ENCODE measurements at regions of chr11 and their contacts with region 1.

Region 1: GRCh38 chr11:124746621-124747243 is 5.3 kb downstream of the VSIG2 start:
- DNase-seq: peak; percentile 67 to 89 (median 78)
- ATAC-seq: peak; percentile 91 to 93
- H3K4me3 Mint-ChIP-seq: peak overlapping the region; percentile 86 to 99 (median 97)
- H3K27ac Mint-ChIP-seq: peak overlapping the region; percentile 77 to 99 (median 96)
- H3K4me1 Mint-ChIP-seq: peaks cover 5 to 36% (median 20%) of the 10 kb centered on the region in 4 donors
- H3K27me3 Mint-ChIP-seq: peaks cover 0 to 2% (median 2%) of the 10 kb centered on the region in 5 donors

Region 2: GRCh38 chr11:124788521-124788920 is 41.8 kb after region 1 on chr11:
- POLR2A ChIA-PET with region 1: no interaction called
- DNase-seq: no peak
- ATAC-seq: no peak
- H3K4me3 Mint-ChIP-seq: no peak overlapping the region
- H3K27ac Mint-ChIP-seq: no peak overlapping the region
- H3K4me1 Mint-ChIP-seq: peaks cover 6 to 34% (median 30%) of the 10 kb centered on the region in 4 donors
- H3K27me3 Mint-ChIP-seq: no peaks in the 10 kb centered on the region

Region 3: DNA sequence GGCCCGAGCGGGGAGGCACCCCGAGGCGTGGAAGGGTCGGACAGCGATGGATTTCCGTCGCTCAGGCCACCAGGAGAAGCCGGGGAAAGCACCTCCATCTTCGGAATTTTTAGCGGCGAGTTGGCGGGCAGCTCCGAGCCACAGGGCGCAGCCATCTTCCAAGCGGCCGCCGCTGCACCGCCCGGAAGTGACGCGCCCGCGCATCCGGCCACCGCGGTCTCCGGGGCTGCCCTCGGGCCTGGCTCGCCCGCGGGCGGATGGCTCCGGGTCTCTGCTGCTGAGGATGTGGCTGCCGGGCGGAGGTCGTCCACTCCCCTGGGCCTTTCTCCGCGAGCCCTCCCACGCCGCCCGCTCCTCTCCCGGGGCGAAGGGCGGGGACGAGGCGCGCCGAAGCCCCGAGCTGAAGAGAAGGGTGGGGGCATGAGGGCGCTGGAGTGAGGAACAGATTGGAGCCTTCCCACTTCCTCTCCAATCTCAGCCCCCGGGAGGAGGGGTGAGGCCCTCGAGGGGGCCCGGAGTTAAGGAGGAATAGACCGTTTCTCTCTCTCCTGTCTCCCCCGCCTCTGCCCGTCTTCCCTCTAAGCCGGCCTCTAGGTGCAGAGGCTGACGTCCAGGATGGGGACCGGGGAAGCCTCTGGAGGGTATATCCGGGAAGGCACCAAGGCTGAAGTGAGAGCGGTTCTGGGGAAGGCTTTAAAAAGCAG is 53.6 kb after region 1 on chr11 and contains the start of gene MSANTD2:
- POLR2A ChIA-PET with region 1: interaction called, 23 read pairs
- DNase-seq: peak; percentile 57 to 83 (median 76)
- ATAC-seq: peak; percentile 83 to 88
- H3K4me3 Mint-ChIP-seq: peak within 1 kb of the TSS; percentile 87 to 98 (median 95)
- H3K27ac Mint-ChIP-seq: peak within 1 kb of the TSS; percentile 91 to 99 (median 96)
- H3K4me1 Mint-ChIP-seq: peaks cover 15 to 34% (median 23%) of the 10 kb centered on the region in 4 donors
- H3K27me3 Mint-ChIP-seq: peaks cover 0 to 2% (median 0%) of the 10 kb centered on the region in 5 donors
- polyA plus RNA-seq, gene MSANTD2: 3.5 to 4.2 (median 4.0) TPM

Region 4: GRCh38 chr11:124865921-124866583 is 119.3 kb after region 1 on chr11:
- POLR2A ChIA-PET with region 1: no interaction called
- DNase-seq: peak in 9 of 10 donors; percentile 19 to 70 (median 49)
- ATAC-seq: peak; percentile 64 to 66
- H3K4me3 Mint-ChIP-seq: peak overlapping the region; percentile 2 to 70 (median 47)
- H3K27ac Mint-ChIP-seq: no peak overlapping the region
- H3K4me1 Mint-ChIP-seq: peaks cover 31 to 69% (median 52%) of the 10 kb centered on the region in 4 donors
- H3K27me3 Mint-ChIP-seq: peaks cover 61 to 94% (median 81%) of the 10 kb centered on the region in 5 donors